ENCODE measurements at regions of chr15 and their contacts with region 1.

Region 1: GRCh38 chr15:94225616-94226015 is 5.7 kb upstream of the MCTP2 start:
- DNase-seq: no peak
- ATAC-seq: no peak
- H3K4me3 ChIP-seq: no peak overlapping the region
- H3K4me3 Mint-ChIP-seq: no peak overlapping the region
- H3K27ac ChIP-seq: no peak overlapping the region
- H3K27ac Mint-ChIP-seq: no peak overlapping the region
- H3K4me1 ChIP-seq: peaks cover 11% of the 10 kb centered on the region
- H3K4me1 Mint-ChIP-seq: peaks cover 17% of the 10 kb centered on the region
- H3K27me3 ChIP-seq: no peaks in the 10 kb centered on the region
- H3K27me3 Mint-ChIP-seq: peaks cover 5% of the 10 kb centered on the region
- CTCF ChIP-seq: no peak

Region 2: GRCh38 chr15:94238539-94239118 is 13.0 kb after region 1 on chr15:
- CTCF ChIA-PET with region 1: interaction called, 8 read pairs
- POLR2A ChIA-PET with region 1: no interaction called
- intact Hi-C with region 1: loop called in 1 of 2 experiments (anchors 1 kb)
- DNase-seq: peak in 1 of 14 experiments; percentile 35
- ATAC-seq: no peak
- H3K4me3 ChIP-seq: no peak overlapping the region
- H3K4me3 Mint-ChIP-seq: no peak overlapping the region
- H3K27ac ChIP-seq: no peak overlapping the region
- H3K27ac Mint-ChIP-seq: no peak overlapping the region
- H3K4me1 ChIP-seq: no peaks in the 10 kb centered on the region
- H3K4me1 Mint-ChIP-seq: peaks cover 23% of the 10 kb centered on the region
- H3K27me3 ChIP-seq: no peaks in the 10 kb centered on the region
- H3K27me3 Mint-ChIP-seq: no peaks in the 10 kb centered on the region
- CTCF ChIP-seq: no peak

Region 3: GRCh38 chr15:94335616-94336015 is 110.0 kb after region 1 on chr15:
- CTCF ChIA-PET with region 1: no interaction called
- POLR2A ChIA-PET with region 1: no interaction called
- intact Hi-C with region 1: no loop called
- DNase-seq: no peak
- ATAC-seq: no peak
- H3K4me3 ChIP-seq: no peak overlapping the region
- H3K4me3 Mint-ChIP-seq: no peak overlapping the region
- H3K27ac ChIP-seq: no peak overlapping the region
- H3K27ac Mint-ChIP-seq: no peak overlapping the region
- H3K4me1 ChIP-seq: no peaks in the 10 kb centered on the region
- H3K4me1 Mint-ChIP-seq: no peaks in the 10 kb centered on the region
- H3K27me3 ChIP-seq: no peaks in the 10 kb centered on the region
- H3K27me3 Mint-ChIP-seq: no peaks in the 10 kb centered on the region
- CTCF ChIP-seq: no peak

Region 4: DNA sequence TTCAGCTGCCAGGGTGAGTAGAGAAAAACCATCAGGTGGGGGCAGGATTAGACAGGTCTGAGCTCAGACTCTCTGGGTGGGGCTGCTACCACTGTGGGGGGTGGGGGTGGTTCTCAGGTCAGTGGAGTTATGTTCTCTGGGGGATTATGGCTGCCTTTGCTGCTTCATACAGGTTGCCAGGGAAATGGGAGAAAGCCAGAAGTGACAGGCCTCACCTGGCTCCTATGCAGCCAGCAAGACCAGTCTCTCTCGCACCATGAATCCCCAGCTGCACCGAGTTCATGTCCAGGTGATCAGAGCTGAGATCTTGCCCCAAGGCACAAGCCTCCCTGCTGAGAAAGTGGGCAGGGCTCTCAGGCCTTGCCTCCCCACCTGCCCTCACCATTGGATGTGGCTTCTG is 833.8 kb after region 1 on chr15:
- CTCF ChIA-PET with region 1: no interaction called
- POLR2A ChIA-PET with region 1: no interaction called
- intact Hi-C with region 1: no loop called
- DNase-seq: no peak
- ATAC-seq: no peak
- H3K4me3 ChIP-seq: no peak overlapping the region
- H3K4me3 Mint-ChIP-seq: no peak overlapping the region
- H3K27ac ChIP-seq: no peak overlapping the region
- H3K27ac Mint-ChIP-seq: no peak overlapping the region
- H3K4me1 ChIP-seq: no peaks in the 10 kb centered on the region
- H3K4me1 Mint-ChIP-seq: no peaks in the 10 kb centered on the region
- H3K27me3 ChIP-seq: no peaks in the 10 kb centered on the region
- H3K27me3 Mint-ChIP-seq: no peaks in the 10 kb centered on the region
- CTCF ChIP-seq: no peak

Measured in CD4-positive, alpha-beta T cell (primary cell).